Psoas muscle (tissue), 8 donors: ENCODE measurements at regions of chr3 and their contacts with region 1.

Region 1: GRCh38 chr3:46866720-46867549 is 3.7 kb upstream of the MYL3 start:
- DNase-seq: peak; percentile 86 to 93
- ATAC-seq: peak; percentile 35 to 55 (median 48)
- H3K4me3 ChIP-seq: peak overlapping the region; percentile 9
- H3K27ac ChIP-seq: peak overlapping the region; percentile 59
- H3K4me1 ChIP-seq: peaks cover 18% of the 10 kb centered on the region
- H3K27me3 ChIP-seq: no peaks in the 10 kb centered on the region
- CTCF ChIP-seq: peak; percentile 76

Region 2: DNA sequence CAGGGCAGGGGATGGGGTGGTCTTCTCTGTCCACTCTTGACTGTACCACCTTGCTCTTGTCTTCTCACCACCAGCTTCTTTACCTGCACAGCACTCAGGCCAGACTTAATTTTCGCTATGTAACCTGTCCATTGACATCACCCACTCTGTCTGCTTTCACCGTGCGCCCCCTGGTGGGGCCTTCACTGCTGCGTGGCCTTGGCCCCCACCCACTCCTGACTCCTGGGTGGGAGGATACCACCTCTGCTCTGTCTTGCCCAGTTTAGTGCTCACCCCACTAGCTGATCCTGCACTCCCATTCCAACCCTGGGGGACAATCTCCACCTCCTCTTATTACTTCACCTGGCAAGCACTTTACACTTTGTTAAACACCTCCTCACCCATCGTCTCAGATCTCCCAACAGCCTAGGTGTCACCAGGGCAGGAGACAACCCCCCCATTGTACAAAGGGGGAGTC is 28.3 kb after region 1 on chr3:
- intact Hi-C with region 1: loop called in 1 of 2 experiments (anchors 1 kb)
- DNase-seq: peak; percentile 78 to 85
- ATAC-seq: peak; percentile 41 to 57 (median 50)
- H3K4me3 ChIP-seq: no peak overlapping the region
- H3K27ac ChIP-seq: no peak overlapping the region
- H3K4me1 ChIP-seq: no peaks in the 10 kb centered on the region
- H3K27me3 ChIP-seq: peaks cover 0 to 2% (median 0%) of the 10 kb centered on the region in 3 donors
- CTCF ChIP-seq: peak; percentile 80

Region 3: GRCh38 chr3:46909535-46910442 is 42.9 kb after region 1 on chr3:
- intact Hi-C with region 1: loop called (anchors 1 to 2 kb)
- DNase-seq: peak; percentile 89 to 93
- ATAC-seq: peak; percentile 87 to 93 (median 90)
- H3K4me3 ChIP-seq: no peak overlapping the region
- H3K27ac ChIP-seq: no peak overlapping the region
- H3K4me1 ChIP-seq: peaks cover 22% of the 10 kb centered on the region
- H3K27me3 ChIP-seq: no peaks in the 10 kb centered on the region
- CTCF ChIP-seq: peak; percentile 88